KBM-7 (cell line): ENCODE measurements at regions of chr9 and their contacts with region 1.

Region 1: GRCh38 chr9:136629752-136630661 is 32.7 kb upstream of the EGFL7 start:
- DNase-seq: peak; percentile 76

Region 2: GRCh38 chr9:136502942-136503550 is 127.0 kb before region 1 on chr9:
- in situ Hi-C with region 1: loop called (anchors 10 kb)
- DNase-seq: no peak